OCI-LY7 (cell line): ENCODE measurements at regions of chr5 and their contacts with region 1.

Region 1: DNA sequence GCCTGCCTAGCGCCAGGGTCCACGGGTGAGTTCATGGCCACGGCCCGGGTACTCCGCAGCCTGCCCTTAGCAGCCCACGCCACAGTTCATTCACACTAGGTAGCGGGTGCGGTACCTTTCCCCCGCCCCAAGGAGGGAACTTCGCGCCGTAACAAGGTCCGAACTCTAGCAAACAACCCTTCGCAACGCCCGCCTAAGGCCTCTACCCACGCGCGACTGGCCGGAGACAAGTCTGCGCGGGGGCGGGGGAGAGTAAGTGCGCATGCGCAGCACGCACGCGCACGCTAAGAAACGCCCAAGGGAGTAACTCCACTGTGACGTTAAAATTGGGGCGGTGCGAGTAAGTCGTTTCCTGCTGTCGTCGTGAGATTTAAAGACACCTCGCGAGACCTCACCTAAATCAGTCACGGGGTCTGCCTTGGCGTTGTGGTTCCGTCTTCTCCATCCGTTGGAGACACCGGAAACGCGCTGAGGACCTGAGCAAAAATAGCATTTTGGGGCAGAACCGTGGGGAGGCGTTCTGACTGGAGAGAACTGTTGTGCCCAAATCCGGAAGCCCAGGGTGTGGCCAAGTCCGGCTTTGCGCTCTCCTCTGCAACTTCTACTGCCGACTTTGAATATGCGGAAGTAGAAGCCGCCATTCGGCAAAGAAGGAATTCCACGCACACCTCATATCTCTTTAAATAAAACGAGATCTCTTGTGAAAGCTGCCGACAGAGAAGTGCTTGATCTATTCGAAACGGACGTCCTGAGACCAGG is at the start of gene RAPGEF6:
- DNase-seq: peak; percentile 100
- H3K4me3 ChIP-seq: peak within 1 kb of the TSS; percentile 87
- H3K27ac ChIP-seq: peak within 1 kb of the TSS; percentile 98
- H3K4me1 ChIP-seq: peaks cover 51% of the 10 kb centered on the region
- CTCF ChIP-seq: no peak; the same call in 1 of the 2 replicates
- total RNA-seq, gene RAPGEF6: 39.6 and 54.4 TPM in 2 replicates

Region 2: DNA sequence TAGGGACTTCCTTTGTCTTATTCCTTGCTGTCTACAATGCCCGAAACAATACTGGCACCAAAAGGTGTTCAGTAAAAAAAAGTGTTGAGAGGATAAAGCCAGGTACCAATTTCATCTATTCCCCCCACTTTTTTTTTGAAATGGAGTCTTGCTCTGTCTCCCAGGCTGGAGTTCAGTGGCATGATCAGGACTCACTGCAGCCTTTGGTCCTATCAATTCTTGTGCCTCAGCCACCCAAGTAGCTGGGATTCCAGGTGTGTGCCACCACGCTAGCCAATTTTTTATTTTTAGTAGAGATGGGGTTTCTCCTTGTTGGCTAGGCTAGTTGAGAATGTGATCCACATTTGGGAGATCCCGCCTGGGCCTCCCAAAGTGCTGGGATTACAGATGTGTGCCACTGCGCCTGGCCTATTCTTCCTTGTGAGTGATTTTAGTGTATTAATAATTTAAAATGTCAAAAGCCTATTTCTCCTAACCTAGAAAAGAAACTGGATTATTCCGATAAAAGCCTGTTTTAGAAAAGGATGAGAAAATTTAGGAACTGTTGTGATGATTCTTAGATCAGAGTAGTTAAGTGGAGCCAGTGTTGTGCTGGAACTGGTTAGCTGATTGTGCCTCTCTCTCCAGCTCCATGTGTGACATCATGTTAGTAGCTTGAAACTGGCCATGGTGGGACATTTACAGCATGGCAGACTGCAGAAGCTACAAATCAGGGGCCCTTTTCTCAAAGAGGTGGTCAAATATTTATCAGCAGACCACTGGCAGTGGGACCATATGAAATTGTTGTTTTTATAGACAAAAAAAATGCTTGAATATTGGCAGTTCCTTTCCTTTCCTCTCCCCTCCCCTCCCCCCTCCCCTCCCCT is 357.1 kb before region 1 on chr5:
- CTCF ChIA-PET with region 1: no interaction called
- POLR2A ChIA-PET with region 1: no interaction called
- intact Hi-C with region 1: loop called (anchors 5 kb)
- DNase-seq: no peak
- H3K4me3 ChIP-seq: no peak overlapping the region
- H3K27ac ChIP-seq: peak overlapping the region; percentile 19
- H3K4me1 ChIP-seq: peaks cover 64% of the 10 kb centered on the region
- CTCF ChIP-seq: no peak

Region 3: GRCh38 chr5:131589510-131590348 is 45.4 kb before region 1 on chr5:
- CTCF ChIA-PET with region 1: no interaction called
- POLR2A ChIA-PET with region 1: interaction called, 4 read pairs
- intact Hi-C with region 1: loop called (anchors 2 kb)
- DNase-seq: peak; percentile 71
- H3K4me3 ChIP-seq: no peak overlapping the region
- H3K27ac ChIP-seq: no peak overlapping the region
- H3K4me1 ChIP-seq: peaks cover 3% of the 10 kb centered on the region
- CTCF ChIP-seq: peak; percentile 96

Region 4: GRCh38 chr5:131647048-131647769 is 12.0 kb after region 1 on chr5:
- CTCF ChIA-PET with region 1: interaction called, 5 read pairs
- POLR2A ChIA-PET with region 1: interaction called, 29 read pairs
- intact Hi-C with region 1: loop called (anchors 1 kb)
- DNase-seq: peak; percentile 73
- H3K4me3 ChIP-seq: peak overlapping the region; percentile 44
- H3K27ac ChIP-seq: peak overlapping the region; percentile 76
- H3K4me1 ChIP-seq: peaks cover 29% of the 10 kb centered on the region
- CTCF ChIP-seq: peak; percentile 68

Region 5: DNA sequence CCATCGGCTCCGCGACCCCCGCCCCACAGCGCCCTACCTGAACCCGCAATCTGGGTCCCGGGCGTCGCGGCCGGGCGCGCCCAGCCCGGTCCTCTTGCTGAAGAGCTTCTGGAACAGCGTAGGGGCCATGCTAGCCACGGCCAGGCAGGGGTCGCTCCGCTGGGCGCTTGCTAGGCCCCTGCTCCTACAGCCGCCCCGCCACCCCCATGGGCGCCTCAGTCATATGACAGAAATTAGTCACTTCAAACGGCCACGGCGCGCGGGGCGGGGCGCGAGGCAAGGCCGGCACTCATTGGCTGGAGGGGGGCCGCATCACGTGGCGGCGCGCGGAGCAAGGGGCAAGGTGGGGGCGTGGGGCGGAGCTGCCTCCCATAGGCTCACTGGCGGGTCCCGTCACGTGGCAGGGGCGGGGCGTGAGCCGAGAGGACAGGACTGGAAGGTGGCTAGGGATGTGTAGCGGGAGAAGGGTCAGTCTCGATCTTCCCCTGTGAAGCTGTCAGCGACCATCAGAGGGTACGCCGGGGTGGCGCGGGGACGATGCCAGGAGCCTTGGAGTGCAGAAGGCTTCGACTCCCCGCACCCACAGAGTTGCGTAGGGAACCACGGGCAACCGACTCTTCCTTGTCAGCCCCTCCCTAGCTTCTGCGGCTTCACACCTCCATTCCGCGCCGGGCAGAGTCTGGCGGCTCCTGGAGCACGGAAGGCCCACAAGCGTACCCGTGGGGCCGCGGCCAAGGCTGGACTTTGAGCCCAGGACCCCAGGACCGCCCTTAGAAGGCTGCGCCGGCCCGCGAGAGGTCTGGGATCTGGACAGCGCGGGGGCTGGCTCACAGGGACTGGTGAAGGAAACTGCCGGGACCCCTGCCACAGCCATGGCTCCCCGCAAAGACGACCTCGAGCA is 161.9 kb after region 1 on chr5 and contains the start of gene FNIP1:
- CTCF ChIA-PET with region 1: no interaction called
- POLR2A ChIA-PET with region 1: interaction called, 4 read pairs
- intact Hi-C with region 1: loop called (anchors 1 kb)
- DNase-seq: peak; percentile 97
- H3K4me3 ChIP-seq: peak within 1 kb of the TSS; percentile 87
- H3K27ac ChIP-seq: peak within 1 kb of the TSS; percentile 43
- H3K4me1 ChIP-seq: peaks cover 35% of the 10 kb centered on the region
- CTCF ChIP-seq: no peak
- total RNA-seq, gene FNIP1: 16.1 and 19.4 TPM in 2 replicates

Region 6: GRCh38 chr5:131810510-131811249 is 175.5 kb after region 1 on chr5:
- CTCF ChIA-PET with region 1: no interaction called
- POLR2A ChIA-PET with region 1: no interaction called
- intact Hi-C with region 1: no loop called
- DNase-seq: peak; percentile 13
- H3K4me3 ChIP-seq: no peak overlapping the region
- H3K27ac ChIP-seq: no peak overlapping the region
- H3K4me1 ChIP-seq: no peaks in the 10 kb centered on the region
- CTCF ChIP-seq: peak; percentile 57